Heart right ventricle (tissue), 16 donors: ENCODE measurements at regions of chr2 and their contacts with region 1.

Region 1: DNA sequence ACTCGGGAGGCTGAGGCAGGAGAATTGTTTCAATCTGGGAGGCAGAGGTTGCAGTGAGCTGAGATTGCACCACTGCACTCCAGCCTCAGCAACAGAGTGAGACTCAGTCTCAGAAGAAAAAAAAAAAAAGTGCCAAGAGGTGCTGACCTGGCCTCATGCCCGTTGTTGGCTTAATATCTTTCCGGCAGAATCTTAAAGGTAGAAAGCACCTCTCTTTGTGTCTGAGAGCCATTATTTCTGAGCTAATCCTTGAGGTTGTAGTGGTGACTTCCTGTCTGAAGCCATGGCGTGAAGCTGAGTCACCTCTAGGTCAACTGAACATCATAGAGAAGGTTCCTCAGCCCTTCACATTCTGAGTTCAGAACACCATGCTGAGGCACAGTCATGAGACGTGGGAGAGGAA is 60.4 kb downstream of the WDSUB1 start:
- DNase-seq: no peak
- ATAC-seq: peak in 6 of 8 donors; percentile 17 to 60 (median 51)
- H3K4me3 ChIP-seq: no peak overlapping the region
- H3K27ac ChIP-seq: peak overlapping the region; percentile 58 to 84 (median 77)
- H3K4me1 ChIP-seq: peaks cover 7 to 62% (median 36%) of the 10 kb centered on the region in 9 donors
- H3K27me3 ChIP-seq: no peaks in the 10 kb centered on the region
- CTCF ChIP-seq: no peak

Region 2: GRCh38 chr2:159262226-159262625 is 36.2 kb after region 1 on chr2:
- intact Hi-C with region 1: loop called in 1 of 10 experiments (anchors 2 kb)
- DNase-seq: no peak
- ATAC-seq: peak in 4 of 8 donors; percentile 29 to 42 (median 38)
- H3K4me3 ChIP-seq: no peak overlapping the region
- H3K27ac ChIP-seq: peak overlapping the region; percentile 1 to 81 (median 62)
- H3K4me1 ChIP-seq: peaks cover 0 to 20% (median 0%) of the 10 kb centered on the region in 9 donors
- H3K27me3 ChIP-seq: no peaks in the 10 kb centered on the region
- CTCF ChIP-seq: no peak